CD8-positive, alpha-beta T cell (primary cell): ENCODE measurements at regions of chrX and their contacts with region 1.

Region 1: DNA sequence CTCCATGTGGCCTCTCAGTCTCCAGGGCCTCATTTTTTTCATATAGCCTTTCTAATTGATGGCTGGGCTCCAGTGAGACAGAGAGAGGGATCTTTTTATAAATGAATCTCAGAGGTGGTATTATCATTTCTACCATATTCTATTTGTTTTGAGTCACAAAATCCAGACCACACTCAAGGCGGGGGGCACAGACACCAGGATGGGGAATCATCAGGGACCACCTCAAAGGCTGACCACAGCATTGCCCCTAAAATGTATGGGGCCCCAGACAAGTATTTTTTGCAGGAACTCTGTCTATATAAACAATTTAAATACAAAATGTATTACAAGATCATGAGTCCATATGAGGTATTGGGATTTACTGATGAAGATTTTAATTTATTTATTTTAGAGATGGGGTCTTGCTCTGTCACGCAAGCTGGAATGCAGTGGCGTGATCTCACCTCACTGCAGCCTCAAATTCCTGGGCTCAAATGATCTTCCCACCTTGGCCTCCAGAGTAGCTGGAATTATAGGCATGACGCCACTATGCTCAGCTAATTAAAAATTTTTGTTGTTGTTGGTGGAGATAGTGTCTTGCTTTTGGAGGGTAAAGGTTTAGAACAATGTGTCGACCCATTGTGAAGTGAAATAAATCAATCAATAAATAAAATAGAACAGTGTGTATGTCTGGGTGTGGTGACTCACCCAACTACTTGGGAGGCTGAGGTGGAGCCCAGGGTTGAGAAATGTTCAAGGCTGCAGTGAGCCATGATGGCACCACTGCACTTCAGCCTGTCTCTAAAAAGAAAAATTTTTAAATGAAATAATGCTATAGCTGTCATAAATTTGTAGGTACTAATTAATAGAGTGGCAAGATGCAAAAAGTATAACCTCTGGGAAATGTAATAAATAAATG is 29.4 kb downstream of the WDR13 start:
- DNase-seq: no peak
- ATAC-seq: no peak
- H3K4me3 ChIP-seq: no peak overlapping the region
- H3K4me3 Mint-ChIP-seq: no peak overlapping the region
- H3K27ac ChIP-seq: no peak overlapping the region
- H3K27ac Mint-ChIP-seq: no peak overlapping the region
- H3K4me1 ChIP-seq: peaks cover 2% of the 10 kb centered on the region
- H3K4me1 Mint-ChIP-seq: peaks cover 6% of the 10 kb centered on the region
- H3K27me3 ChIP-seq: no peaks in the 10 kb centered on the region
- H3K27me3 Mint-ChIP-seq: no peaks in the 10 kb centered on the region
- CTCF ChIP-seq: no peak

Region 2: GRCh38 chrX:48589482-48590162 is 37.0 kb before region 1 on chrX:
- CTCF ChIA-PET with region 1: no interaction called
- POLR2A ChIA-PET with region 1: no interaction called
- intact Hi-C with region 1: no loop called
- DNase-seq: no peak
- ATAC-seq: no peak
- H3K4me3 ChIP-seq: no peak overlapping the region
- H3K4me3 Mint-ChIP-seq: no peak overlapping the region
- H3K27ac ChIP-seq: no peak overlapping the region
- H3K27ac Mint-ChIP-seq: no peak overlapping the region
- H3K4me1 ChIP-seq: no peaks in the 10 kb centered on the region
- H3K4me1 Mint-ChIP-seq: no peaks in the 10 kb centered on the region
- H3K27me3 ChIP-seq: no peaks in the 10 kb centered on the region
- H3K27me3 Mint-ChIP-seq: no peaks in the 10 kb centered on the region
- CTCF ChIP-seq: no peak

Region 3: DNA sequence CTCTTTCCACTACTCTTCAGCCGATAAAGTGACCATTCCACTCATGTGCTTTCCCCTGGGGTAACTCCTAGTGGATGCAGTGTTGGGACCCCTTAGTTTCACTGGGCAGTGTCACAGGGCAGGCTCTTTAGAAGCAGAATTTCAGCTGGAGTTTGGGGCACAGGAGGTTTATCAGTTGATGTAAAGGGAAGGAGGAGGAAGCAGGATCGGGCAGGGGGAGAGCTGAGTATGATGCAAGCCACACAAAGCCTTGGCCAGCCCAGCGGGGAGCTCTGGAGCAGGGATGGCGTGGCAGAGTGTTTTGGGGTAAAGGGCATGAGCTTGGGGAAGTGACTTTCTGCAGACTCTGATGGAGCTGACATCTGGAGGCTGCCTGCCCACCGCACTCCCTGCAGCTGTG is 10.1 kb before region 1 on chrX:
- CTCF ChIA-PET with region 1: no interaction called
- POLR2A ChIA-PET with region 1: no interaction called
- intact Hi-C with region 1: no loop called
- DNase-seq: no peak
- ATAC-seq: no peak
- H3K4me3 ChIP-seq: no peak overlapping the region
- H3K4me3 Mint-ChIP-seq: no peak overlapping the region
- H3K27ac ChIP-seq: no peak overlapping the region
- H3K27ac Mint-ChIP-seq: no peak overlapping the region
- H3K4me1 ChIP-seq: no peaks in the 10 kb centered on the region
- H3K4me1 Mint-ChIP-seq: no peaks in the 10 kb centered on the region
- H3K27me3 ChIP-seq: no peaks in the 10 kb centered on the region
- H3K27me3 Mint-ChIP-seq: no peaks in the 10 kb centered on the region
- CTCF ChIP-seq: no peak

Region 4: GRCh38 chrX:49748211-49748956 is 1121.7 kb after region 1 on chrX:
- CTCF ChIA-PET with region 1: no interaction called
- POLR2A ChIA-PET with region 1: no interaction called
- intact Hi-C with region 1: loop called in 1 of 2 experiments (anchors 10 kb)
- DNase-seq: no peak
- ATAC-seq: no peak
- H3K4me3 ChIP-seq: no peak overlapping the region
- H3K4me3 Mint-ChIP-seq: no peak overlapping the region
- H3K27ac ChIP-seq: no peak overlapping the region
- H3K27ac Mint-ChIP-seq: no peak overlapping the region
- H3K4me1 ChIP-seq: no peaks in the 10 kb centered on the region
- H3K4me1 Mint-ChIP-seq: no peaks in the 10 kb centered on the region
- H3K27me3 ChIP-seq: no peaks in the 10 kb centered on the region
- H3K27me3 Mint-ChIP-seq: peaks cover 6% of the 10 kb centered on the region
- CTCF ChIP-seq: no peak

Region 5: DNA sequence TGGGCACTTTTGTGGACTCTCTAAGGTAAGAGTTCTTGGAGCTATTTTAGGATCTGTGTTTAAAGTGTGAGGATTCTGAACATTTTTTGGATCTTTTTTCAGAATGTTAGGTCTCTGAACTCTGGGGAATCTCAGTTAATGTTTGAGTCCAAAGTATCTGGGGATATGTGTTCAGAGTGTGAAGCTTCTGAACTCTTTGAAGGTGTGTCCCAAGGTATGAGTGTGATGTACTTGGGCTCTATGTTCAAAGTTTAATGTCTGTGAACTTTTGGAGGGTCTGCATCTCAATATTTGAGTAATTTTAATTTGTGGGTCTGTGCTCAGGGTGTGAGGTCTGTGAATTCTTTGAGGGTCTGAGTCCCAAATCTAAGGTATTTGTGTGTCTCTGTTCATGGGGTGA is 1167.0 kb after region 1 on chrX:
- CTCF ChIA-PET with region 1: no interaction called
- POLR2A ChIA-PET with region 1: no interaction called
- intact Hi-C with region 1: no loop called
- DNase-seq: no peak
- ATAC-seq: no peak
- H3K4me3 ChIP-seq: no peak overlapping the region
- H3K4me3 Mint-ChIP-seq: no peak overlapping the region
- H3K27ac ChIP-seq: no peak overlapping the region
- H3K27ac Mint-ChIP-seq: no peak overlapping the region
- H3K4me1 ChIP-seq: no peaks in the 10 kb centered on the region
- H3K4me1 Mint-ChIP-seq: no peaks in the 10 kb centered on the region
- H3K27me3 ChIP-seq: no peaks in the 10 kb centered on the region
- H3K27me3 Mint-ChIP-seq: peaks cover 13% of the 10 kb centered on the region
- CTCF ChIP-seq: no peak